Heart left ventricle (tissue), 16 donors: ENCODE measurements at regions of chr12 and their contacts with region 1.

Region 1: DNA sequence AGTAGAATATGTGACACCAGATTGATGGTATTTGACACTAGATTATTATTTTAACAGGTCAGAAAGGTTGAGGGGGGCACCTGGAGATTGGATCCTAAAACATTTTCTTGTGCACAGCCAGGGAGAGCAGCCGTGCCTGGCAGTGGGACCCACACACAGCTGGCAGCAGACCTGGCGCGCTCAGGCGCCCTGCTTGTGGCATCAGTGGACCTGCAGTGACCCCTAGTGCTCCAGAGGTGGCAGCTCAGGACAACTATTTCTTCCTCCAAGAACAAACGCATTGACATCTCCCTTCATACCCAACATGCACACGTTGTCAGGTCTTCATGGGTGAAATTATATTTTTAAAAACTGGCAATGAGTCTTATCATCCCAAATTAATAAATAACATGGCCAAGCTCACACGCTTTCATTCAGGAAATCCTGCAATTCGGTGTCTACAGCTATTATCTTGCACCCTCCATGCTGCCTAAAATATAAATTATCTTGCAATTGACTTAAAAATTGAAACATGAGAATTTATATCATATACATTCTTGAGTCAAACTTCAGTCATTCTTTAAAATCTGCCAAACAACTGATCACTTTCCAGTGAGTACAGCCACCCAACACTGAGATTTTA is 7.7 kb upstream of the TMEM132D start:
- DNase-seq: peak in 2 of 5 donors; percentile 11 to 39
- ATAC-seq: peak in 3 of 4 donors; percentile 73 to 79 (median 75)
- H3K4me3 ChIP-seq: no peak overlapping the region
- H3K27ac ChIP-seq: no peak overlapping the region
- H3K4me1 ChIP-seq: no peaks in the 10 kb centered on the region
- H3K27me3 ChIP-seq: peaks cover 0 to 36% (median 4%) of the 10 kb centered on the region in 9 donors
- CTCF ChIP-seq: peak; percentile 35 to 65 (median 60)
- POLR2A ChIP-seq: no peak

Region 2: DNA sequence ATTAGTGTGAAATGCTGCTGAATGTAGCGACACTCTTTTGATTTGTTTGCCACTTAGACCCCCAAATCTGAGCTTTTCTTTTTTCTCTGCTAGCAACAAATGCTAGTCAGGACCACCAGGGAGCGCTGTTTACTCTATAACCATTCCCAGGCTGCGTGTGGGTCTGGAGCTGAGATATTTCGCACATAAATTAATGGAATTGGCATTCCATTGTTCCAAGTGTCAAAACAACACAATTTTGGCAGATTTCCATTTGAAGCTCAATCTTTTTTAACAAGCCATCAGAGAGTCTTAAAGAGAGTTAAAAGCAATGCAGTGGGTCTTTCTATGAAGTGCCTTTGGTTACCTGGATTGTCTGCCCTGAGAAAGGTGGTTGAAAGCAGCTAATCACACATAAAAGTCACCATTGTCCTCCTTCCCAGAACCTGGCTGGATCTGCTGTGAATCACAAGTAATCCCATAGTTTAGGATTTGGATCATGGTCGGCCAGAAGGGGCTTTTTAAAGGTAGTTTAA is 1651.9 kb before region 1 on chr12:
- intact Hi-C with region 1: loop called in 8 of 10 experiments (anchors 5 kb)
- DNase-seq: no peak
- ATAC-seq: no peak
- H3K4me3 ChIP-seq: no peak overlapping the region
- H3K27ac ChIP-seq: no peak overlapping the region
- H3K4me1 ChIP-seq: no peaks in the 10 kb centered on the region
- H3K27me3 ChIP-seq: peaks cover 0 to 43% (median 4%) of the 10 kb centered on the region in 9 donors
- CTCF ChIP-seq: peak; percentile 30 to 78 (median 58)
- POLR2A ChIP-seq: no peak

Region 3: GRCh38 chr12:128387811-128388422 is 1523.6 kb before region 1 on chr12:
- intact Hi-C with region 1: loop called in 1 of 10 experiments (anchors 2 kb)
- DNase-seq: peak in 3 of 5 donors; percentile 12 to 40 (median 34)
- ATAC-seq: peak in 3 of 4 donors; percentile 50 to 81 (median 50)
- H3K4me3 ChIP-seq: no peak overlapping the region
- H3K27ac ChIP-seq: peak overlapping the region in 2 of 12 donors; percentile 29
- H3K4me1 ChIP-seq: peaks cover 0 to 12% (median 0%) of the 10 kb centered on the region in 12 donors
- H3K27me3 ChIP-seq: peaks cover 0 to 56% (median 2%) of the 10 kb centered on the region in 9 donors
- CTCF ChIP-seq: peak; percentile 35 to 68 (median 50)
- POLR2A ChIP-seq: no peak

Region 4: GRCh38 chr12:128644664-128645296 is 1266.8 kb before region 1 on chr12:
- intact Hi-C with region 1: loop called in 5 of 10 experiments (anchors 5 to 10 kb)
- DNase-seq: no peak
- ATAC-seq: no peak
- H3K4me3 ChIP-seq: no peak overlapping the region
- H3K27ac ChIP-seq: no peak overlapping the region
- H3K4me1 ChIP-seq: no peaks in the 10 kb centered on the region
- H3K27me3 ChIP-seq: no peaks in the 10 kb centered on the region
- CTCF ChIP-seq: peak; percentile 13 to 58 (median 44)
- POLR2A ChIP-seq: no peak

Region 5: GRCh38 chr12:128783129-128783574 is 1128.4 kb before region 1 on chr12:
- intact Hi-C with region 1: loop called in 4 of 10 experiments (anchors 10 kb)
- DNase-seq: no peak
- ATAC-seq: no peak
- H3K4me3 ChIP-seq: no peak overlapping the region
- H3K27ac ChIP-seq: no peak overlapping the region
- H3K4me1 ChIP-seq: peaks cover 0 to 8% (median 0%) of the 10 kb centered on the region in 12 donors
- H3K27me3 ChIP-seq: no peaks in the 10 kb centered on the region
- CTCF ChIP-seq: no peak
- POLR2A ChIP-seq: no peak

Region 6: GRCh38 chr12:128969480-128970055 is 942.0 kb before region 1 on chr12:
- intact Hi-C with region 1: loop called in 1 of 10 experiments (anchors 5 kb)
- DNase-seq: no peak
- ATAC-seq: peak in 2 of 4 donors; percentile 62 to 79
- H3K4me3 ChIP-seq: no peak overlapping the region
- H3K27ac ChIP-seq: no peak overlapping the region
- H3K4me1 ChIP-seq: no peaks in the 10 kb centered on the region
- H3K27me3 ChIP-seq: peaks cover 0 to 55% (median 12%) of the 10 kb centered on the region in 9 donors
- CTCF ChIP-seq: peak in 7 of 12 donors; percentile 12 to 29 (median 18)
- POLR2A ChIP-seq: no peak

Region 7: GRCh38 chr12:129854591-129854990 is 56.9 kb before region 1 on chr12:
- intact Hi-C with region 1: no loop called
- DNase-seq: no peak
- ATAC-seq: no peak
- H3K4me3 ChIP-seq: no peak overlapping the region
- H3K27ac ChIP-seq: no peak overlapping the region
- H3K4me1 ChIP-seq: no peaks in the 10 kb centered on the region
- H3K27me3 ChIP-seq: peaks cover 0 to 7% (median 0%) of the 10 kb centered on the region in 9 donors
- CTCF ChIP-seq: no peak
- POLR2A ChIP-seq: no peak

Region 8: GRCh38 chr12:129871991-129872972 is 39.3 kb before region 1 on chr12:
- intact Hi-C with region 1: no loop called
- DNase-seq: no peak
- ATAC-seq: no peak
- H3K4me3 ChIP-seq: no peak overlapping the region
- H3K27ac ChIP-seq: no peak overlapping the region
- H3K4me1 ChIP-seq: no peaks in the 10 kb centered on the region
- H3K27me3 ChIP-seq: peaks cover 0 to 13% (median 0%) of the 10 kb centered on the region in 9 donors
- CTCF ChIP-seq: no peak
- POLR2A ChIP-seq: no peak